Activated CD8-positive, alpha-beta memory T cell treated with anti-CD3 and anti-CD28 coated beads, Interleukin-2, amount 10 ng/mL, durations not matched to agents 7 days and 5 days (primary cell): ENCODE measurements at regions of chr6 and their contacts with region 1.

Region 1: DNA sequence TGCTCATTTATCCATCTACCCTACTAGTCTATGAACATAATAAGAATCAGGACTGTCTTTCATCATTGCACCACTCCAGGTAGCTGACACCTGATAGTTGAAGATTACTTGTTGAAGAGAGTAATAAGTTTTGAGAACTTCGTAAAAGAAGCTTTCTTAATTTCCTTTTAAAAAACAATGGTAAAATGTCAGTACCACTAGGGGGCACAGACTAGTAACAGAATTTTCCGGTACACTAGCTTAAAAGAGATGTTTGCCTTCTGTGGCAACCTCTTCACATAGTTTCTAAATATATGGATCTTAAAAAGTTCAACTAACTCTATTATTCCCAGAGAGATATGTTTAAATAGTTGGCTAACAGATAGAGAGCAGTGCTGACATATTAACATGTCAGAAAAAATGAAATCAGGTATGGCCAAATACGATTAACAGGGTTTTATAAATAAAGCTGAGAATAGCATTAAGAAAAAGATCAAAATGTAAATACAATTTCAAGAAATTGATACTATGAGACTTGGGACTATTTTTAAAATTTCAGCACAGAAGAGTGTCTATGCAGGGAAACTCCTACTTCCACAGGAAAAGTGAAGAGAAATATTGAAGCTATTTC is 5.4 kb upstream of the KCNQ5 start:
- DNase-seq: no peak
- ATAC-seq: no peak
- H3K4me3 Mint-ChIP-seq: no peak overlapping the region
- H3K27ac Mint-ChIP-seq: no peak overlapping the region
- H3K4me1 Mint-ChIP-seq: peaks cover 29% of the 10 kb centered on the region
- H3K27me3 Mint-ChIP-seq: peaks cover 18% of the 10 kb centered on the region

Region 2: DNA sequence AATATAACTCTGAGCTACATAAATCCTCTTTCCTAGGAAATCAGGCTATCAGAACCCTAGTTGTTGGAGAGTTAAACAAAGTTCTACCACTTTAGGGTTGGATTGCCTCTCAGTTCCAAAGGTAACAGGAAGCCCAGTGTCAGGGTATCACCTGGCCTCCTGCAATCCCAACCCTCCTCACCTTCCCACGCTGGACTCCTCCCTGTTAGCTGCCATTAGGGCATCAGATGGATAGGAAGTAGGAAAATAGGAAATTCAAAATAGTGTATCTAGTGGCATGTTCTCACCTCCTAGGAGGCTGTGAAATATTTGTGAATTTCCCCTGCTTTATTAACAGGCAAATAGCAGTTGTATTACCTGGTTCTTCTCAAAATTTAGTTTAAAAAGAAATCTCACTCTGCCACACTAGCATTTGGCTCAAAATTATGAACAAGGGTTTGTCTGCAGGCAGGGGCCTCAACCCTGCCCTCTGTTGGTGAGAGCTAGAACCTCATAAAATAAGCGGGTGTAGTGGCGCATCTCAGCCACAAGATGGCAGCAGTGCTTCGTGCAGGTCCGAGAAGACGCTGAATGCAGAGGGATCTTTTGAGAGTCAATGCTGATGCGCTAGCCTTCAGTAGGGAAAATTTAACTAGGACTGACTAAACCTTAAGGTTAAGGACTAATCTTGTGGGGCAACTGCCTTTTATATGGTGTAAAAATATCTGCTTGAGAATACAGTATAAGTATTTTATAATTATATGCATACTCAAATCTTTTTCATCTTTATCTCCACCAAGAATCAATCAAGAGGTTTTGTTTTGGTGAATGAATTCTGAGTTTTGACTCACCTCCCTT is 204.4 kb before region 1 on chr6:
- CTCF ChIA-PET with region 1: interaction called, 17 read pairs
- DNase-seq: peak; percentile 75
- ATAC-seq: peak; percentile 76
- H3K4me3 Mint-ChIP-seq: no peak overlapping the region
- H3K27ac Mint-ChIP-seq: no peak overlapping the region
- H3K4me1 Mint-ChIP-seq: no peaks in the 10 kb centered on the region
- H3K27me3 Mint-ChIP-seq: peaks cover 30% of the 10 kb centered on the region

Region 3: GRCh38 chr6:72760114-72760793 is 143.7 kb after region 1 on chr6:
- CTCF ChIA-PET with region 1: no interaction called
- DNase-seq: no peak
- ATAC-seq: no peak
- H3K4me3 Mint-ChIP-seq: no peak overlapping the region
- H3K27ac Mint-ChIP-seq: no peak overlapping the region
- H3K4me1 Mint-ChIP-seq: no peaks in the 10 kb centered on the region
- H3K27me3 Mint-ChIP-seq: no peaks in the 10 kb centered on the region